GM12878 (cell line): ENCODE measurements at regions of chr20 and their contacts with region 1.

Region 1: DNA sequence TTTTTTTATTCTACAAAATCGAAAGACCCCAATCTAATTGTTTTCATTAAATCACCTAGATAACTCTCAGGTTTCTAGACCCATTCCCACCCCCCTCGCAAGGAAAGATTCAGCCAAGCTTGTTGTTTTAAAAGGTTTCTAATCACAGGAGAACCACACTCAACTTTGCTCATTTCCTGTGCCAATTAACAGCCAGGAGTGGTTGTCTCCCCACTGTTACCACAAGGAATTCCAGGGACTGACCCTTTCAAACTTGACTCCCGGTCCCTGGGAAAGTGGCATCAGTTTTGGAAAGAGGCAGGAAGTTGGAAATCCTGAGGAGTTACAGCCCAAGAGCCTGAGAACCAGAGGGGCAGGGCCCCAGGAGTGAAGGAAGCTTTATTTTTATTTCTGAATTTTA is 561.3 kb upstream of the JAG1 start:
- DNase-seq: no peak
- ATAC-seq: peak; percentile 30
- H3K4me3 ChIP-seq: no peak overlapping the region
- H3K27ac ChIP-seq: peak overlapping the region; percentile 32; the same call in 1 of the 2 replicates
- H3K4me1 ChIP-seq: peaks cover 15% of the 10 kb centered on the region
- H3K27me3 ChIP-seq: no peaks in the 10 kb centered on the region
- CTCF ChIP-seq: no peak
- EP300 ChIP-seq: no peak
- POLR2A ChIP-seq: no peak
- RAD21 ChIP-seq: no peak

Region 2: GRCh38 chr20:11216451-11217314 is 18.4 kb before region 1 on chr20:
- CTCF ChIA-PET with region 1: interaction called, 6 read pairs
- POLR2A ChIA-PET with region 1: no interaction called
- RAD21 ChIA-PET with region 1: interaction called, 7 read pairs
- SMC1A ChIA-PET with region 1: interaction called, 13 read pairs
- in situ Hi-C with region 1: no loop called
- intact Hi-C with region 1: no loop called
- DNase-seq: no peak
- ATAC-seq: no peak; the same call in 2 of the 3 replicates
- H3K4me3 ChIP-seq: no peak overlapping the region
- H3K27ac ChIP-seq: no peak overlapping the region
- H3K4me1 ChIP-seq: peaks cover 13% of the 10 kb centered on the region
- H3K27me3 ChIP-seq: no peaks in the 10 kb centered on the region
- CTCF ChIP-seq: no peak
- EP300 ChIP-seq: no peak
- POLR2A ChIP-seq: no peak
- RAD21 ChIP-seq: no peak

Region 3: DNA sequence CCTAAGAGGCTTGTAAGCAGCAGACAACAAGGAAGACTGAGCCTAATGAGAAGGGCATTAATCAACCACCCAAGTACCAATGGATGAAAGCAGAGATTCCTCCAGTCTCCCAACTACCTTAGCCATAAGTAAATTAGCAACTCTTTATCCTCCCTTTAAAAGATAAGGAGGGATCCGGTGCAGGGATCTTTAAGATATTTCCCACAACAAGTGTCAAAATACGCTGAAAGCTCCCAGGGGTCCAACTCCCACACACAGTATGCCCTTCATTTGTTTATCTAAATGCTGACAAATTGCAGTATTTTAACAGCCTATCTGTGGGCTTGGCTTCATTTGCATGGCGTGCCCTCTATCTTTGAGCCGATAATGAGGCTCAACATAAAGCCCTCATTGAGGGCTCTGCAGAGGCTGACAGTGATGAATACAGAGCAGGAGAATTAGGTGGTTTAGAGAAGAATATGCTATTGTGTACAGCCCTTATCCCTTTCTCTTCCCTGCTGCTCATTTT is 13.7 kb after region 1 on chr20:
- CTCF ChIA-PET with region 1: interaction called, 7 read pairs
- POLR2A ChIA-PET with region 1: interaction called, 3 read pairs
- RAD21 ChIA-PET with region 1: no interaction called
- SMC1A ChIA-PET with region 1: interaction called, 10 read pairs
- in situ Hi-C with region 1: no loop called
- intact Hi-C with region 1: no loop called
- DNase-seq: no peak
- ATAC-seq: peak; percentile 52
- H3K4me3 ChIP-seq: no peak overlapping the region
- H3K27ac ChIP-seq: no peak overlapping the region
- H3K4me1 ChIP-seq: no peaks in the 10 kb centered on the region
- H3K27me3 ChIP-seq: no peaks in the 10 kb centered on the region; a peak in 2 of 4 replicates
- CTCF ChIP-seq: no peak
- EP300 ChIP-seq: no peak
- POLR2A ChIP-seq: no peak
- RAD21 ChIP-seq: no peak